Head of caudate nucleus (tissue), 42 donors: ENCODE measurements at regions of chr5 and their contacts with region 1.

Region 1: DNA sequence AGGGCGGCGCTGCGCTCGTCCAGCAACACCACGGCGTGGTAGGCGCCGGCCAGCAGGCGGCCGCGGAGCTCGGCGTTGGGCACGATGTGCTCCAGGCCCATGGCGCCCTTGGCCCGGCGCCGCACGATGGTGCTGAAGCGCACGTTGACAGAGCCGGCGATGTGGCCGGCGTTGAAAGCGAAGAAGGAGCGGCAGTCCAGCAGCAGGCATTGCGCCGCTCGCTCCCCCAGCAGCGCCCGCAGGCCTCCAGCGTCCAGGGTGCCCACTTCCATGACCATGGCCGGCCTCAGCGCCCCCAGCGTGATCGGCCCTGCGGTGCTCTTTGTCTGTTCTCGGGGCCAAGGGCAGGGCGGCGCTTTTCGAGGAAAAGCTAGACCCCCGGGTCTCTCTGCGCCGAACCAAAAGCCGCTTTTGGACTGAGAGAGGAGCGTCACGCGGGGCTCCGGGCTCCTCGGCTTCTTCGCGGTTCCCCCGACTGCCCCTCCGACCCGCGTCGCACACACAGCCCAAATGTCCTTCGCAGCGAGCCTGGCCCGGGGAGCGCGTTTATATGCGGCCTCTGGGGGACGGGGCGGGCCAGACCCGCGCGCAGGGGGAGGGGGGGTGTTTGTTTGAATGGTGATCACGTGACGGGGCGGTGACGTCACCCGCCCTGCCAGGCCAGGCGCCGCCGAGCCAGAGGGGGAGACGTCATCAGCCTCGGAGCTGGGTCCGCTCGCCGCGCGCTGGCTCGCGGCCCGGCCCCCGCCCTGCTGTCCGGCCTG is at the start of gene DUSP1:
- DNase-seq: peak; percentile 97 to 100 (median 99)

Region 2: GRCh38 chr5:172380987-172381643 is 389.7 kb before region 1 on chr5:
- intact Hi-C with region 1: no loop called
- DNase-seq: peak; percentile 63 to 91 (median 82)

Region 3: GRCh38 chr5:172603251-172603806 is 167.5 kb before region 1 on chr5:
- intact Hi-C with region 1: no loop called
- DNase-seq: peak in 41 of 42 donors; percentile 13 to 67 (median 41)

Region 4: GRCh38 chr5:172714491-172715421 is 56.1 kb before region 1 on chr5:
- intact Hi-C with region 1: loop called (anchors 2 kb)
- DNase-seq: peak; percentile 54 to 89 (median 78)

Region 5: DNA sequence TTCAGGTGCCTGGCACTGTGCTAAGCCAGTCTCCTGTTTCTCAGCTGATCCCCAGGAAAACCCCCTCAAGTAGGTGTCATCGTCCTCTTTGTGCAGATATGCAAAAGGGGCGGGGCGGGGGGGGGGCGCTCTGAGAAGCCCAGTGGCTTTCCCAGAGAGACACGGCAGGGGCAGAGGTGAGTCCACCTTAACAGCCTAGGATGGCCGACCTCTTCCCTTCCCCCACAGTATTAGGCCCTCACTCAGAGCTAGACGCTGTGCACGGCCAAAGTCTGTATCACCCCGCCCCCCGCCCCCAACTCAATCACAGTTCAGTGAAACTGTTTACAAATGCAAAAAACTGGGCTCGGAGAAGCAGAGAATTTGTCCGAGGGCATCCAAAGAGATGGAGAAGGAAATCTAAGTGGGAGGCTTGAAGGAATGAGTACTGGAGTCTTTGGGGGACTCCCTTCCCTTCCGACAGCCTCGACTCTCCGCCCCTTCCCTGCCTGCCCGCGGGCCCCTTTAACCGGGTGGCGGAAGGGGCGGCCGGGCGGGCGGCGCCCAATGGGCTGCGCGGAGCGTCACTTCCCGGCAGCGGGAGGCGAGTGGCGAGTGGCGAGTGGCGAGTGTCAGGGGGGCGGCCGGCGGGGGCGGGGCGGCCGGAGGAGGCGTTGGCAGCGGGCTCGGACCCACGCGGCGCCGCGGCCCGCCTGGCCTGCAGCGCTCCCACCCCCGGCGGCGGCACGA is 63.0 kb after region 1 on chr5 and contains the start of gene ERGIC1:
- intact Hi-C with region 1: loop called (anchors 10 kb)
- DNase-seq: peak; percentile 56 to 94 (median 89)

Region 6: DNA sequence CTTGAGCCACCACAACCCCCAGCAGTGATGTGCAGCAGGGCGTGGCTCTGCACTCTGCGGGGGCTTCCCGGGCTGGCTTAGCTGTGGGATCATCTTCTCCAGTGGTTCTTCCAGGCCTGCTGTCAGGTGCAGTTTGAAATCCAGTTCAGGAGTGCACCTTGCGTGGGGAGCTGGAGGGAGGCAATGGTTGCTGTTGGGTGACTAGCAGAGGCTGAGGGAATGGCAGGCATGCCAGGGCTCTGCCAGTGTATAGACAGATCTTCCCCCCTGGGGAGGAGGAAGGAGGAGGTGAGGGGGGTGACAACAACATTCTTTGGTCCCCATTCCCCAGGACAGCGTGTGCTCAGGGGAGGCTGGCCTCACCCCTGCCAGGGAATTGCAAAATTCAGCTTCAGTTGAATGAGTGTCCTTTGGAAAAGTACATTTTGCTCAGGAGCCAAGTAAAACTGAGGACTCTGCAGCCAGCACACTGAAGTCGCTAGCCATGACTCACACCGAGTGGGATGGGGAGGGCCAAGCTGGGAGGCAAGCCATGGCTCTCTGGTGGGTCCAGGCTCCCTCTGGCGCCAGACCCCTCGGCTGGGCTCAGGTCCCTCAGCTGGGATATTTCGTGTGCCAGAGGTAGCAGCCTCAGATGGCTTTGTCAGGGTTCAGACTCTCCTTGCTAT is 98.2 kb after region 1 on chr5:
- intact Hi-C with region 1: loop called (anchors 10 kb)
- DNase-seq: peak; percentile 26 to 91 (median 66)

Region 7: GRCh38 chr5:172932313-172933017 is 161.6 kb after region 1 on chr5:
- intact Hi-C with region 1: loop called (anchors 5 kb)
- DNase-seq: peak; percentile 40 to 87 (median 74)